ENCODE measurements at regions of chr13 and their contacts with region 1.

Region 1: DNA sequence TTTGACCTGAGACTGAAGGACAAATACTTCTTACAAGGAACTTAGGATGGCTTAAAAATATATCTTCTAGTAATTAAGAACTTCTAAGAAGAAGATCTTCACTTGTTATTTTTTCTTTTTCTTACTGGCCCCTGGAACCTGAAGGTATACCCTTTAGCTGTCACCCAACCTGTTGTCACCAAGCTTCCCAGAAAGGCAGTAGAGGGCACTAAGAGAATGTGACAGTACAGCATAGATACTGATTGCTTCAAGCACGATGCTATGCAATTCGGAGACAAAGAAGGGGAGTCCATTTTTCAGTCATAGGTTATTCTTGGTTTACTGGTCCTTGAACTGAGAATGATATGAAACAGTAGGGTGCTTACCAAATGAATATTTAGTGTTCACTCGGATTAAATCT is 208.3 kb upstream of the PCDH9 start:
- DNase-seq: peak; percentile 4
- ATAC-seq: peak; percentile 80
- H3K4me3 ChIP-seq: no peak overlapping the region
- H3K27ac ChIP-seq: no peak overlapping the region
- H3K4me1 ChIP-seq: no peaks in the 10 kb centered on the region
- H3K27me3 ChIP-seq: no peaks in the 10 kb centered on the region
- CTCF ChIP-seq: peak; percentile 37

Region 2: GRCh38 chr13:67833564-67833963 is 395.1 kb after region 1 on chr13:
- CTCF ChIA-PET with region 1: no interaction called
- POLR2A ChIA-PET with region 1: no interaction called
- intact Hi-C with region 1: loop called (anchors 1 kb)
- DNase-seq: no peak
- ATAC-seq: no peak
- H3K4me3 ChIP-seq: no peak overlapping the region
- H3K27ac ChIP-seq: no peak overlapping the region
- H3K4me1 ChIP-seq: no peaks in the 10 kb centered on the region
- H3K27me3 ChIP-seq: no peaks in the 10 kb centered on the region
- CTCF ChIP-seq: no peak

Region 3: DNA sequence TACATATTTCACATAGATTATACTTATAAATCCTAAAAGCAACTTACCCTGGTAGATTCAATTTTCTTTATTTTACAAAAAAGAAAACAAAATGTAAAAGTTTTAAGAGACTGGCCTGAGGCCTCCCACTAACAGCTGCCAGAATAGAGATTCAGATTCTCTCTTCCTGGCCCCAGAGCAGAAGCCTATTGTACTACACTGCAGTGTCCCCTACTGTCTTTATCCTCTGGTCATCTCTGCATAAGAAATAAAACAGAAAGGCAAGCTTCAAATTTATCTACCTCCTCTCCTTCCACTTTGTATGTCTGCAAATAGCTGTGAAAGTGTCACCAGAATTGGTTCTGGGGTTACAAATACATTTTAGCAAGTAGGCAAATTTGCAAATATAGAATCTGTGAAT is 795.8 kb after region 1 on chr13:
- CTCF ChIA-PET with region 1: no interaction called
- POLR2A ChIA-PET with region 1: no interaction called
- intact Hi-C with region 1: loop called (anchors 2 kb)
- DNase-seq: peak; percentile 15
- ATAC-seq: peak; percentile 57
- H3K4me3 ChIP-seq: no peak overlapping the region
- H3K27ac ChIP-seq: no peak overlapping the region
- H3K4me1 ChIP-seq: no peaks in the 10 kb centered on the region
- H3K27me3 ChIP-seq: no peaks in the 10 kb centered on the region
- CTCF ChIP-seq: peak; percentile 30; the same call in 1 of the 2 replicates